ENCODE measurements at regions of chr11 and their contacts with region 1.

Region 1: GRCh38 chr11:57741132-57742086 is at the start of gene SELENOH:
- DNase-seq: peak; percentile 95 to 99
- H3K4me3 ChIP-seq: peak within 1 kb of the TSS; percentile 76 to 99 (median 92)
- H3K27ac ChIP-seq: peak within 1 kb of the TSS; percentile 83
- H3K4me1 ChIP-seq: peaks cover 0 to 9% (median 3%) of the 10 kb centered on the region in 4 experiments; a peak in 4 of 7 replicates
- H3K27me3 ChIP-seq: no peaks in the 10 kb centered on the region
- CTCF ChIP-seq: peak in 1 of 3 experiments; percentile 5; a peak in 1 of 4 replicates
- EP300 ChIP-seq: peak in 1 of 2 experiments; percentile 97; a peak in 2 of 3 replicates
- POLR2A ChIP-seq: peak; percentile 88 to 98
- RAD21 ChIP-seq: peak; percentile 18 to 19; a peak in 3 of 4 replicates
- total RNA-seq, gene SELENOH: 242 and 243 TPM in 2 replicates

Region 2: GRCh38 chr11:57546869-57547475 is 194.4 kb before region 1 on chr11:
- CTCF ChIA-PET with region 1: no interaction called
- POLR2A ChIA-PET with region 1: no interaction called
- DNase-seq: no peak
- H3K4me3 ChIP-seq: no peak overlapping the region
- H3K27ac ChIP-seq: no peak overlapping the region
- H3K4me1 ChIP-seq: peaks cover 0 to 15% (median 11%) of the 10 kb centered on the region in 4 experiments; a peak in 6 of 7 replicates
- H3K27me3 ChIP-seq: no peaks in the 10 kb centered on the region; a peak in 2 of 7 replicates
- CTCF ChIP-seq: peak in 2 of 3 experiments; percentile 19 to 21; a peak in 2 of 4 replicates
- EP300 ChIP-seq: no peak
- POLR2A ChIP-seq: no peak
- RAD21 ChIP-seq: peak; percentile 1 to 17; a peak in 1 of 4 replicates

Region 3: DNA sequence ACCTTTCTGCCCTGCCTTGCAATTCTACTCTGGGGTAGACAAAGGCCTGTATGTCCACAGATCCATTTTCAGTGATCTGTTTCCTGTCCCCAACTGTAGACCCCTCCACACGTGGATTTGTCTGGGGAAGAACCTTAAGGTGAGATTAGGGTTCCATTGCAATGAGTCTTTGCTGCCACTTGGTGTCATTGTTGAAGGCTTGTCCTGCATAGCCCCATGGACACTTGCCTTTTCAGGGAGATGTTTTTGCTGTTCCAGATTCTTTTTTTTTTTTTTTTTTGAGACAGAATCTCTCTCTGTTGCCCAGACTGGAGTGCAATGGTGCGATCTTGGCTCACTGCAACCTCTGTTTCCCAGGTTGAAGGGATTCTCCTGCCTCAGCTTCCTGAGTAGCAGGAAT is 122.1 kb before region 1 on chr11:
- CTCF ChIA-PET with region 1: no interaction called
- POLR2A ChIA-PET with region 1: no interaction called
- DNase-seq: no peak
- H3K4me3 ChIP-seq: no peak overlapping the region
- H3K27ac ChIP-seq: no peak overlapping the region
- H3K4me1 ChIP-seq: no peaks in the 10 kb centered on the region
- H3K27me3 ChIP-seq: no peaks in the 10 kb centered on the region
- CTCF ChIP-seq: peak in 2 of 3 experiments; percentile 52 to 72; a peak in 3 of 4 replicates
- EP300 ChIP-seq: no peak
- POLR2A ChIP-seq: no peak
- RAD21 ChIP-seq: peak; percentile 38 to 61

Region 4: GRCh38 chr11:57698843-57699365 is 42.5 kb before region 1 on chr11:
- CTCF ChIA-PET with region 1: no interaction called
- POLR2A ChIA-PET with region 1: interaction called, 13 read pairs
- DNase-seq: no peak
- H3K4me3 ChIP-seq: no peak overlapping the region
- H3K27ac ChIP-seq: no peak overlapping the region
- H3K4me1 ChIP-seq: no peaks in the 10 kb centered on the region
- H3K27me3 ChIP-seq: no peaks in the 10 kb centered on the region
- CTCF ChIP-seq: no peak
- EP300 ChIP-seq: no peak
- POLR2A ChIP-seq: no peak
- RAD21 ChIP-seq: no peak

Region 5: DNA sequence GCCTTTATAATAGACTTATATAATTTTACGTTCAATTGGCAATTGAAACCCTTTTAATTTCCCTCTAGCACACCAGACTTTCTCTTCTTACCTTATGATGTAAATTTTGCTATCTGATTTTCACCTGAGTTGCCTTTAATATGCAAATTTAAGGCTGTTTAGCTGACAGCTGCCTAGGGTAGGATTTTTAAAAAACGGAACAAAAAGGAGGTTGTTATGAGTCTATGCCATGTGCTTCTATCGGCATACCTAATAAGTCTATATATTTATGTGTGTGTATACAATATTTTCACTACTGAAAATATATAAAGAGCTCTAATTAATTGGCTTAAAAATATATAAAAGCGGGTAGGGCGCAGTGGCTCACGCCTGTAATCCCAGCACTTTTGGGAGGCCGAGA is 11.9 kb before region 1 on chr11:
- CTCF ChIA-PET with region 1: interaction called, 3 read pairs
- POLR2A ChIA-PET with region 1: interaction called, 30 read pairs
- DNase-seq: no peak
- H3K4me3 ChIP-seq: no peak overlapping the region
- H3K27ac ChIP-seq: no peak overlapping the region
- H3K4me1 ChIP-seq: peaks cover 0 to 3% (median 1%) of the 10 kb centered on the region in 4 experiments; a peak in 2 of 7 replicates
- H3K27me3 ChIP-seq: no peaks in the 10 kb centered on the region
- CTCF ChIP-seq: no peak
- EP300 ChIP-seq: no peak
- POLR2A ChIP-seq: no peak
- RAD21 ChIP-seq: no peak

Region 6: GRCh38 chr11:57761301-57762234 is 20.2 kb after region 1 on chr11 and contains the start of gene CTNND1:
- CTCF ChIA-PET with region 1: interaction called, 21 read pairs
- POLR2A ChIA-PET with region 1: interaction called, 16 read pairs
- DNase-seq: peak; percentile 71 to 84
- H3K4me3 ChIP-seq: peak within 1 kb of the TSS; percentile 88 to 97 (median 91)
- H3K27ac ChIP-seq: peak within 1 kb of the TSS; percentile 93
- H3K4me1 ChIP-seq: peaks cover 0 to 10% (median 2%) of the 10 kb centered on the region in 4 experiments; a peak in 1 of 7 replicates
- H3K27me3 ChIP-seq: no peaks in the 10 kb centered on the region
- CTCF ChIP-seq: no peak
- EP300 ChIP-seq: no peak; a peak in 1 of 3 replicates
- POLR2A ChIP-seq: peak; percentile 84 to 91
- RAD21 ChIP-seq: peak; percentile 3; a peak in 1 of 4 replicates
- total RNA-seq, gene CTNND1: 164 and 167 TPM in 2 replicates

Region 7: GRCh38 chr11:57800444-57801182 is 59.2 kb after region 1 on chr11:
- CTCF ChIA-PET with region 1: interaction called, 182 read pairs
- POLR2A ChIA-PET with region 1: interaction called, 18 read pairs
- DNase-seq: no peak
- H3K4me3 ChIP-seq: no peak overlapping the region
- H3K27ac ChIP-seq: no peak overlapping the region
- H3K4me1 ChIP-seq: peaks cover 0 to 2% (median 0%) of the 10 kb centered on the region in 4 experiments; a peak in 2 of 7 replicates
- H3K27me3 ChIP-seq: no peaks in the 10 kb centered on the region
- CTCF ChIP-seq: peak in 2 of 3 experiments; percentile 66 to 83; a peak in 3 of 4 replicates
- EP300 ChIP-seq: no peak
- POLR2A ChIP-seq: no peak
- RAD21 ChIP-seq: peak; percentile 95 to 97